CD14-positive monocyte (primary cell): ENCODE measurements at regions of chr17 and their contacts with region 1.

Region 1: DNA sequence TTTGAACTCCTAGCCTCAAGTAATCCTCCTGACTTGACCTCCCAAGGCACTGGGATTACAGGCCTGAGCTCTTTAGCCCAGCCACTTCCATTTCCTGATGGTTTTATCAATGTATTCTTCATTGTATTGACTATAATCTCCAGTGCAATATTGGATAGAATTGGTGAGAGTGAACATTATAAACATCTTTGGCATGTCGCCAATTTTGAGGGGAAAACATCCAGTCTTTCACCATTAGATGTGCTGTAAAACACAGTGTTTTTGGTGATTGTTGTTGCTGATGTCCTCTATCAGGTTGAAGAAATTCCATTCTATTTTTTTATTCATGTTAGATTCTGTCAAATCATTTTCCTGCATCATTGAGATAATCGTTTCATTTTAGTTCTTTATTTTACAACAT is 951.9 kb downstream of the KCNJ18 start:
- DNase-seq: no peak
- H3K4me3 ChIP-seq: no peak overlapping the region
- H3K4me3 Mint-ChIP-seq: no peak overlapping the region
- H3K27ac ChIP-seq: no peak overlapping the region
- H3K27ac Mint-ChIP-seq: no peak overlapping the region
- H3K4me1 ChIP-seq: no peaks in the 10 kb centered on the region
- H3K4me1 Mint-ChIP-seq: no peaks in the 10 kb centered on the region
- H3K27me3 ChIP-seq: no peaks in the 10 kb centered on the region
- H3K27me3 Mint-ChIP-seq: no peaks in the 10 kb centered on the region
- CTCF ChIP-seq: no peak

Region 2: DNA sequence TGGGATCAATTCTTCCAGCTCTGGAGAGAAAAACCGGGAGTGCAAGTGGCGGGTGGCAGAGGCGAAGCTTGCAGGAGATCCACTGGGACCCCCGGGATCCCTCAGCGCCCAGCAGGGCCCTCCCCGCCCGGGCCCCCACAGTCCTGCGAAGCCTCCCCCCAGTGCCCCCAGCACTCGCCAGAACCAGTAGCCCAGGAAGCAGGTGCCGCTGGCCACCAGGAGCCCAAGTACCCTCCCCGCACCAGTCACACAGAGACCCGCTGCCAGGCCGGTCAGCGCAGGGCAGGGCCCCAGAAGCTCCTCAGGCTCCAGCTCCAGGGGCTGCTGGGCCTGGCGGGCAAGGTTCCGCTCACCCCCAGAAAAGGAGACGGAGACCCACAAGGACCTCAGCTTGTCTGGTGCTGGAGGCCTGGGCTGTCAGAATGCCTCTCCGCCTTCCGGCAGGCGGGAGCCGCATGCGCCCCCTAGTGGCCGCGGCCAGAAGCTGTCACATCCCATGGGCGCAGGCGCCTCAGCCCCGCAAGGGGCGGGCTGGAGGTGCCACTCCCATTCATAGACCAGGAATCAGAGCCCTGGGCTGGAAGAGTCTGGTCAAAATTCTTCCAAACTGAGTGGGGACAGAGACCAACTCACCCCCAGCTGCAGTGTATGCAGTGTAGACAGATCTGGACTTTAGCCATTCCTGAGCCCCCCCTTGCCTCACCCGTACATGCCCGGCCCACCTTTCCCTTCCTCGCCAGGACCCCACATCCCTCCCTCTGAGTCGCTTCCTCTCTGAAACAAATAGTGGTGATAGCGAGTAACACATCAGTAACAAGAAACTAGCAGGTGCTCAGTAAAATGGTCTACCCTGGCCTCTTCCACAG is 50.3 kb after region 1 on chr17:
- intact Hi-C with region 1: loop called in 1 of 2 experiments (anchors 10 kb)
- DNase-seq: no peak
- H3K4me3 ChIP-seq: peak overlapping the region in 1 of 3 experiments; percentile 14
- H3K4me3 Mint-ChIP-seq: no peak overlapping the region
- H3K27ac ChIP-seq: no peak overlapping the region
- H3K27ac Mint-ChIP-seq: no peak overlapping the region
- H3K4me1 ChIP-seq: no peaks in the 10 kb centered on the region
- H3K4me1 Mint-ChIP-seq: no peaks in the 10 kb centered on the region
- H3K27me3 ChIP-seq: no peaks in the 10 kb centered on the region
- H3K27me3 Mint-ChIP-seq: peaks cover 0 to 2% (median 0%) of the 10 kb centered on the region in 3 donors
- CTCF ChIP-seq: peak; percentile 35